Activated CD8-positive, alpha-beta T cell treated with anti-CD3 and anti-CD28 coated beads, Interleukin-2, amount 10 ng/mL, durations not matched to agents 7 days and 5 days (primary cell): ENCODE measurements at regions of chr12 and their contacts with region 1.

Region 1: GRCh38 chr12:98490501-98491453 is 24.6 kb upstream of the TMPO start:
- DNase-seq: peak; percentile 88
- ATAC-seq: peak; percentile 95
- H3K4me3 Mint-ChIP-seq: peak overlapping the region; percentile 60
- H3K27ac Mint-ChIP-seq: peak overlapping the region; percentile 94
- H3K4me1 Mint-ChIP-seq: peaks cover 7% of the 10 kb centered on the region
- H3K27me3 Mint-ChIP-seq: peaks cover 8% of the 10 kb centered on the region

Region 2: DNA sequence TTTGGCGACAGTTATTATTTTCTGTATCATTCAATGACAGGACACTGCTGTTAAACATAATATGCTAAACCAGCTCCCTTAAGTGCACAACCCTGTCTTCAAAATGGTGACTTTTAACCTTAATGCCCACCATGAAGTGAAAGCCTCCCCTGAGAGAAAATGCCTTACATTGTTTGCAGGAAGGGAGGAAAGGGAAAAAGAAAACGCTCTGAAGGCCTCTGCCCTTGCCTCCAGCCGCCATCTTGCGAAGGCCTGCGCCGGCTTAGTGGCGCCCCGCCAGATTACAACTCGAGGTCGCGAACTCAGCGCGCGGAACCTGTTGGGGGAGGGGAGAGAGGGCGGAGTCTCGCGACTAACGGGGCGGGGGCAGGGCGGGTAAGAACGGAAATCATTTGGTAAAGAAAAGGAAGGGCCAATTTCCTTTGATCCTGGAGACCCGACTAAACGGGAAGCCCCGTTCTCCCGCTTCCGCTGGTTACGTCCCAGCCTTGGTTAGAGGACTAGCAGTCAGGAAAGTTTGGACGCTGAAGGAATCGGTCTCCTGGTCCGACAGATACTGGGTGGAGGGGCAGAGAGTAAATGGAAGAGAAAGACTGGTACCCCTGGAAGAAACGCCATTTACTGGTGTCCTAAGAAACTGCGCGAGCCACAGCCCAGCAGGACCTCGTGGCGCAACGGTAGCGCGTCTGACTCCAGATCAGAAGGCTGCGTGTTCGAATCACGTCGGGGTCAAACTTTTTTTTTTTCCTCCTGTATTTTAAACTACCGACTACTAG is 13.0 kb after region 1 on chr12:
- CTCF ChIA-PET with region 1: interaction called, 16 read pairs
- POLR2A ChIA-PET with region 1: interaction called, 9 read pairs
- DNase-seq: peak; percentile 96
- ATAC-seq: peak; percentile 88
- H3K4me3 Mint-ChIP-seq: peak overlapping the region; percentile 95
- H3K27ac Mint-ChIP-seq: peak overlapping the region; percentile 99
- H3K4me1 Mint-ChIP-seq: peaks cover 23% of the 10 kb centered on the region
- H3K27me3 Mint-ChIP-seq: peaks cover 8% of the 10 kb centered on the region